Panc1 (cell line): ENCODE measurements at regions of chr18 and their contacts with region 1.

Region 1: GRCh38 chr18:42798606-42799170 is 316.8 kb downstream of the RIT2 start:
- DNase-seq: no peak
- ATAC-seq: no peak
- H3K4me3 ChIP-seq: no peak overlapping the region
- H3K27ac ChIP-seq: no peak overlapping the region
- H3K4me1 ChIP-seq: no peaks in the 10 kb centered on the region
- H3K27me3 ChIP-seq: no peaks in the 10 kb centered on the region
- CTCF ChIP-seq: no peak

Region 2: DNA sequence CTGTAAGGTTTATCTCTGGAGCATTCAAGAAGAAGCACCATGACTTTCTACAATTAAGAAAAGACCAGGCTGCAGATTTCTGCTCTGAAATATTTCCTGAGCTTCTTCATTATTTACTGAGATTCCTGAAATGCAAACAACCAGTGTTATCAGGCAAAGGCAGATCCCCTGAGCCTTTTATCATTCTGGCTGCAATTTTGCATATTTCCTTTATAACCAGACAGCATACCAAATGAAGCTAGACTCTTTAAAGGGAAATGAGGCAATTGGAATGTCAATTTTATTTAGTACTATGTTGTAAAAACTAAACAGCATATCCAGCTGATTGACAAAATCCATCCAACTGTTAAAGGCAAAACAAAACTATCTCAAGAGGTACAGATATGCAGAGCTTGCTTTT is 55.7 kb before region 1 on chr18:
- CTCF ChIA-PET with region 1: no interaction called
- POLR2A ChIA-PET with region 1: no interaction called
- in situ Hi-C with region 1: no loop called
- intact Hi-C with region 1: loop called (anchors 10 kb)
- DNase-seq: no peak
- ATAC-seq: no peak
- H3K4me3 ChIP-seq: no peak overlapping the region
- H3K27ac ChIP-seq: no peak overlapping the region
- H3K4me1 ChIP-seq: no peaks in the 10 kb centered on the region
- H3K27me3 ChIP-seq: no peaks in the 10 kb centered on the region
- CTCF ChIP-seq: no peak